Natural killer cell (primary cell): ENCODE measurements at regions of chr12 and their contacts with region 1.

Region 1: DNA sequence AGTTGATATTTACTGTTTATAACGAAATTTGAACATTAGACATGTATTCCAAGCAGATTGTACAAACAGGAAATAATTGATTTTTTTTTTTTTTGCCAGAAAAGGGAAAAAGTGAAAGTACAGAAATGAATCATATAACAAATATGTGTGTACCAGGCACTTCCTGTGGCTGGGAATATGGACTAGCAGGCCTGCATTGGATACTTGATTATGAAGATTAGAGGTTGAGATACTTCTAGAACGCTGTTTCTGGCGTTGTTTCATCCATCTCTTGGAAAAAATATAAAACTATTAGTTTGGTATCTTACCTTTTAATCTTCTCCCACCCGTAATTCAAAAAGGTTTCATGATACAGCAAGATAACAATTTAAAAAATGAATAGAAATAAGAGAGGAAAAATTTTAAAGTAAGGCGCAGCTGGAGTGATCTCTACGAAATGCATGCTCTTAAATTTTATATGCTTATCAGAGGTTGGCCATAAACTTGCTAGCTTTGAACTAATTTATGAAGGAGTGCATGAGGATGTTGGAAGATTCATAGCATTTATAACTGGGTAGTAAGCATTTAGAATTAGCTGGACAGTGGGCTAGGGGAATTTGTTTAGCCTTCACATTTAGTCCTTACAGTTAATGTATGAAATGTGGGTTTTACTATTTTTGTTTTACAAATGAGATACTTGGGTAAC is 90.8 kb downstream of the AEBP2 start:
- DNase-seq: no peak
- ATAC-seq: no peak
- H3K4me3 ChIP-seq: no peak overlapping the region
- H3K4me3 Mint-ChIP-seq: no peak overlapping the region
- H3K27ac ChIP-seq: no peak overlapping the region
- H3K27ac Mint-ChIP-seq: peak overlapping the region in 1 of 2 donors; percentile 41
- H3K4me1 ChIP-seq: peaks cover 4% of the 10 kb centered on the region
- H3K4me1 Mint-ChIP-seq: peaks cover 31 to 39% of the 10 kb centered on the region in 2 donors
- H3K27me3 ChIP-seq: no peaks in the 10 kb centered on the region
- H3K27me3 Mint-ChIP-seq: no peaks in the 10 kb centered on the region
- CTCF ChIP-seq: no peak

Region 2: DNA sequence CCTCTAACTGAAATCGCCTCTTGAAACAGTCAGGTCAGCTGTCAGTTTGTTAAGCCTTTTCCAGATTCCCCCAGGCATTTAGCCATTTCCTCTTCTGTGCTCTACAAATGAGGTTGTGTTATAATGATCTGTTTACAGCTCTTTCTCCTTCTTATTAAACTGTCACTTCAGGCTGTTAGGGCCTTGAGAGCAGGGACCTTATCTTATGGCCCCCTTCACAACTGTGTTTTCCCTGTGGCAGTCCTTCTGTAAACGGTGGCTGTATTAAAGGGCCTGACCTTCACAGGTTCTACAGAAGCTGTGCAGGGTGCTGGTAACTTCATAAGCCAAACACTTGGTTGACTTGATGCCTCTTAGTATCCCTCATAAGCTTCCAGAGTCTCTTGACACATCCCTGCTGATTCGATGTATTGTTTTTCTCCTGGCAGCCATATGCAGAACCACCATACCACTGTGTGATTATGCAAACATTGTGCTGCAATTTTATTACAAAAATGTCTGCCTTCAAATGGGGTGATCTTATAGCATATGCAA is 295.9 kb before region 1 on chr12:
- intact Hi-C with region 1: no loop called
- DNase-seq: no peak
- ATAC-seq: no peak
- H3K4me3 ChIP-seq: no peak overlapping the region
- H3K4me3 Mint-ChIP-seq: no peak overlapping the region
- H3K27ac ChIP-seq: no peak overlapping the region
- H3K27ac Mint-ChIP-seq: no peak overlapping the region
- H3K4me1 ChIP-seq: no peaks in the 10 kb centered on the region
- H3K4me1 Mint-ChIP-seq: peaks cover 7 to 14% of the 10 kb centered on the region in 2 donors
- H3K27me3 ChIP-seq: no peaks in the 10 kb centered on the region
- H3K27me3 Mint-ChIP-seq: no peaks in the 10 kb centered on the region
- CTCF ChIP-seq: no peak

Region 3: DNA sequence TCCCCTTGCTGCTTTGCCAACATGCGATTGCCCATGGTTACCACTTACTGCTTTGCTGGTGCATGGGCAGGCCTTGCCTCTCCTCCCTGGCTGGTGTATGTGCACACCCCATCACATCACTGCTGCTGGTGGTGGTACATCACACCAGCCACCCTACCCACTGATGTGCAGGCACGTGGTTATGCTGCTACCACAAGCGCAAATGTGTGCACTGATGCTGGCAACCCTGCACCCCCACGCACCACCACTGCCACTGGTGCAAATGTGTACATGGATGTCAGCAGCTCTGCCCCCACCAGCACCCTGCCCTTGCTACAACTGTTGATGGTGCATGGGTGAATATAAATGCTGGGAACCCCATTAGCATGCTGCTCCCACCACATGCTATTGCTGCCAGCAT is 170.9 kb after region 1 on chr12:
- intact Hi-C with region 1: loop called (anchors 5 kb)
- DNase-seq: no peak
- ATAC-seq: peak in 1 of 3 donors; percentile 59
- H3K4me3 ChIP-seq: no peak overlapping the region
- H3K4me3 Mint-ChIP-seq: no peak overlapping the region
- H3K27ac ChIP-seq: no peak overlapping the region
- H3K27ac Mint-ChIP-seq: no peak overlapping the region
- H3K4me1 ChIP-seq: peaks cover 8% of the 10 kb centered on the region
- H3K4me1 Mint-ChIP-seq: peaks cover 6 to 10% of the 10 kb centered on the region in 2 donors
- H3K27me3 ChIP-seq: no peaks in the 10 kb centered on the region
- H3K27me3 Mint-ChIP-seq: peaks cover 0 to 2% of the 10 kb centered on the region in 2 donors
- CTCF ChIP-seq: no peak